Activated CD4-positive, alpha-beta memory T cell treated with anti-CD3 and anti-CD28 coated beads, Interleukin-2, amount 10 ng/mL, durations not matched to agents 7 days and 5 days (primary cell): ENCODE measurements at regions of chr1 and their contacts with region 1.

Region 1: DNA sequence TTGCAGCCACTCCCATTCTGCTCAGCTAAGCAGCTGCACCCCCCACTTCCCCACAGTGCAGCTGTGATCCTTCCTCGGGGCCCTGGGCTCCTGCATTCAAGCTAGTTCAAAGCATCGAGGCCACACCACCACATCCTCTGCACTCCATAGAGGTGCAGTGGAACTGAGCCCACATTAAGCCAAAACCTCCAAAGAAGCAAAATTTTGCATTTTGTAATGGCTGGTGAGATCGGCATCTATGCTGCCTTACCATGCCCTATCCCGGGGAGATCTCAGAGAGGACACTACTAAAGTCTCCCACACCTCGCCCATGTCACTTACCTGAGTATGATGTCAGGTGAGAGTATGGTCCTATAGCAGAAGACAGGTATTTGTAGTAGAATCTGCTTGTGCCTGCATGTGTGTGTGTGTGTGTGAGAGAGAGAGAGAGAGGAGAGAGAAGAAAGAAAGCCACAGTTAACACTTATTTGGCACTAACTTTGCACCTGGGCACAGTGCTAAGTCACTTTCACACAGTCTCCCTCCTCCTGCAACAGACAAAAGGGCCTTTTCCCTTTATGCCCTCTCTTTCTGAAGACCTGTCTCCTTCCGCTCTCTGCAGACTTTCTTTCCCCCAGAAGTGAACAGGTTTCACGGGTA is 89.8 kb downstream of the KIF14 start:
- DNase-seq: peak; percentile 22
- H3K4me3 Mint-ChIP-seq: no peak overlapping the region
- H3K27ac Mint-ChIP-seq: peak overlapping the region; percentile 1
- H3K4me1 Mint-ChIP-seq: peaks cover 9% of the 10 kb centered on the region
- H3K27me3 Mint-ChIP-seq: peaks cover 2% of the 10 kb centered on the region

Region 2: DNA sequence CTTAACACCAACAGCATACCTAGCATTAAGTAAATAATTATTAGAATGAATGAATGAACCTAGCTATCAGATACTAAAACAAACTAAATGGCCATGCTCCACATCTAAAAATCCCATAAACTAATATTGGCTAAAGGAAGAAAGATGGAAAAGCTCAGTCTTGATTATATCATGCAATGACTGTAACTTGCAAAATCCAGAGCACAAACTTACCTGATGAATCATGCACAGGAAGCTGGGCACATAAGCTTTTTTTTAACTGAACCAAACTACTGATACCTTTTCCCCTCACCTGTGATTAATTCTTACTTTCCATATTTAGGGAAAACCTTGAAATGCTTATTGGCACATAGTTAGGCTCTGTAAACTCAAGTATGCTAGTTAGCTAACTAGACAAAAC is 19.6 kb after region 1 on chr1:
- CTCF ChIA-PET with region 1: interaction called, 13 read pairs
- POLR2A ChIA-PET with region 1: no interaction called
- DNase-seq: no peak
- H3K4me3 Mint-ChIP-seq: no peak overlapping the region
- H3K27ac Mint-ChIP-seq: no peak overlapping the region
- H3K4me1 Mint-ChIP-seq: peaks cover 2% of the 10 kb centered on the region
- H3K27me3 Mint-ChIP-seq: peaks cover 8% of the 10 kb centered on the region